ENCODE measurements at regions of chr2 and their contacts with region 1.

Region 1: GRCh38 chr2:209960676-209961630 is 41.5 kb upstream of the RPE start:
- DNase-seq: peak; percentile 73
- H3K4me3 Mint-ChIP-seq: no peak overlapping the region
- H3K27ac Mint-ChIP-seq: no peak overlapping the region
- H3K4me1 Mint-ChIP-seq: no peaks in the 10 kb centered on the region
- H3K27me3 Mint-ChIP-seq: no peaks in the 10 kb centered on the region
- CTCF ChIP-seq: peak; percentile 68

Region 2: DNA sequence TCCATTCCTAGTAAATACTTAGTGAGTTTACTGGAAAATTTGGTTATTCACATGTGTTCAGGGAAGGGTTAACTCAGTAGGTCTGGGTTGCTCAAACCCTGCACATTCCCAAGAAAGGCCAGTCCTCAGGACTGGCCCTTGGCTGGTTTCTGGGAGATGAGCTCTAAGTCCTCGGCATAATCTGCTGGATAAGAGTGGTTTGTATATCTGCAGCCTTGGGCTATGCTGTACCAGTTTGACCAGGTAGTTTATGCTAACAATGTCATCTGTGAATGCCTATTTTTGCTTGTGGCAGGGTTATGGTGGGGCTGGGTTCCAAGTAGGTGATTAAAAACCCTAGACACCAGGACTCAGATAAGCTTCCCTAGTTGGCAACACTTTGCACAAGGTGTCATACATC is 1561.8 kb before region 1 on chr2:
- CTCF ChIA-PET with region 1: no interaction called
- POLR2A ChIA-PET with region 1: no interaction called
- intact Hi-C with region 1: no loop called
- DNase-seq: no peak
- H3K4me3 Mint-ChIP-seq: no peak overlapping the region
- H3K27ac Mint-ChIP-seq: no peak overlapping the region
- H3K4me1 Mint-ChIP-seq: no peaks in the 10 kb centered on the region
- H3K27me3 Mint-ChIP-seq: peaks cover 48% of the 10 kb centered on the region
- CTCF ChIP-seq: no peak

Region 3: GRCh38 chr2:209556354-209556961 is 404.5 kb before region 1 on chr2:
- CTCF ChIA-PET with region 1: interaction called, 12 read pairs
- POLR2A ChIA-PET with region 1: no interaction called
- intact Hi-C with region 1: loop called (anchors 1 kb)
- DNase-seq: peak; percentile 62
- H3K4me3 Mint-ChIP-seq: no peak overlapping the region
- H3K27ac Mint-ChIP-seq: no peak overlapping the region
- H3K4me1 Mint-ChIP-seq: no peaks in the 10 kb centered on the region
- H3K27me3 Mint-ChIP-seq: no peaks in the 10 kb centered on the region
- CTCF ChIP-seq: peak; percentile 61

Region 4: DNA sequence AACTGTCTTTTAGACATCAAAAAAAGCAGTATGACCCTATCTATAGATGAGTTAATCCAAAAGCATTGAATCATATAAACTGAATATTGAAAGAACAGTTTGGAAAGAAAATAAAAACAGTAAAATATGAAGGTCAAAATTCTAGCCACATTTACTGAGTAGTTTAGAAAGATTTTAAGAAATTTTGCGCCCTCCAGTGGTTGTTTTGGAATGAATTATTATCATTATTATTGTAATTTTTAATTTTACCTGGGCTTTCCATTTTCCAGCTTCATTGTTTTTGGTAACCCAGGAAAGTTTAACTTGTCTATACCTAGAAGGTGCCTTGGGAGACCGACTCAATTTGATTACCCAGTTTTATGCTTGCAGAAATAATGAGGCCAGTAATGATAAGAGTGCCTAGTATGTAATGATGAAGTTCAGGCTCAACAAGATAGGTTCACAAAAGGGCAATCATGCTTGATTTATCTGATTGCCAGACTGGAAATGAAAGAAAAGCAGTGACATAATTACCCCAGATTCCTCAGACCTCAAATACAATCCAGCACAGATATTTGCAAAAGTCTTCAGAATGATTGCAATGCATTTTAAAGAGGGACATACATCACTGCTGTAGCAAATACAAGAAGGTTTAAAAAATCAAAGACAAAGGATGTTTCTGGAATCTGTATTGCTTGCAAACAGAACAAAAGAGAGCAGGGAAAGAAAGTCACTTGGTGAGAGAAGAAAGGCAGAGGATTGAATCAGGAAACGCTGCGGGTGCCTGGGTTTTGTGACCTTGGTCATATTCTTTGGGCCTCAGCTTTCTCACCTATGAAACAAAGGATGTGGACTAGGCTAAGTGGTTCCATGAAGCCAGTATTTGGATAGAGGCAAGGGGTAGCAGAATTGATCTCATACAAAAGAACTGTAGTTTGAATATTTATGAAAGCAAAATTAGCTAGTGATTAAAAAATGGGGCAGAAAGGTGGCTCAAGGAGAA is 383.3 kb before region 1 on chr2:
- CTCF ChIA-PET with region 1: interaction called, 4 read pairs
- POLR2A ChIA-PET with region 1: no interaction called
- intact Hi-C with region 1: loop called (anchors 5 kb)
- DNase-seq: peak; percentile 45
- H3K4me3 Mint-ChIP-seq: no peak overlapping the region
- H3K27ac Mint-ChIP-seq: no peak overlapping the region
- H3K4me1 Mint-ChIP-seq: no peaks in the 10 kb centered on the region
- H3K27me3 Mint-ChIP-seq: no peaks in the 10 kb centered on the region
- CTCF ChIP-seq: peak; percentile 32

Region 5: GRCh38 chr2:209790066-209790728 is 170.8 kb before region 1 on chr2:
- CTCF ChIA-PET with region 1: interaction called, 8 read pairs
- POLR2A ChIA-PET with region 1: no interaction called
- intact Hi-C with region 1: loop called (anchors 10 kb)
- DNase-seq: no peak
- H3K4me3 Mint-ChIP-seq: peak overlapping the region; percentile 4
- H3K27ac Mint-ChIP-seq: no peak overlapping the region
- H3K4me1 Mint-ChIP-seq: peaks cover 6% of the 10 kb centered on the region
- H3K27me3 Mint-ChIP-seq: no peaks in the 10 kb centered on the region
- CTCF ChIP-seq: no peak

Region 6: GRCh38 chr2:209840434-209840833 is 120.5 kb before region 1 on chr2:
- CTCF ChIA-PET with region 1: no interaction called
- POLR2A ChIA-PET with region 1: no interaction called
- intact Hi-C with region 1: no loop called
- DNase-seq: no peak
- H3K4me3 Mint-ChIP-seq: no peak overlapping the region
- H3K27ac Mint-ChIP-seq: no peak overlapping the region
- H3K4me1 Mint-ChIP-seq: no peaks in the 10 kb centered on the region
- H3K27me3 Mint-ChIP-seq: no peaks in the 10 kb centered on the region
- CTCF ChIP-seq: no peak

Region 7: DNA sequence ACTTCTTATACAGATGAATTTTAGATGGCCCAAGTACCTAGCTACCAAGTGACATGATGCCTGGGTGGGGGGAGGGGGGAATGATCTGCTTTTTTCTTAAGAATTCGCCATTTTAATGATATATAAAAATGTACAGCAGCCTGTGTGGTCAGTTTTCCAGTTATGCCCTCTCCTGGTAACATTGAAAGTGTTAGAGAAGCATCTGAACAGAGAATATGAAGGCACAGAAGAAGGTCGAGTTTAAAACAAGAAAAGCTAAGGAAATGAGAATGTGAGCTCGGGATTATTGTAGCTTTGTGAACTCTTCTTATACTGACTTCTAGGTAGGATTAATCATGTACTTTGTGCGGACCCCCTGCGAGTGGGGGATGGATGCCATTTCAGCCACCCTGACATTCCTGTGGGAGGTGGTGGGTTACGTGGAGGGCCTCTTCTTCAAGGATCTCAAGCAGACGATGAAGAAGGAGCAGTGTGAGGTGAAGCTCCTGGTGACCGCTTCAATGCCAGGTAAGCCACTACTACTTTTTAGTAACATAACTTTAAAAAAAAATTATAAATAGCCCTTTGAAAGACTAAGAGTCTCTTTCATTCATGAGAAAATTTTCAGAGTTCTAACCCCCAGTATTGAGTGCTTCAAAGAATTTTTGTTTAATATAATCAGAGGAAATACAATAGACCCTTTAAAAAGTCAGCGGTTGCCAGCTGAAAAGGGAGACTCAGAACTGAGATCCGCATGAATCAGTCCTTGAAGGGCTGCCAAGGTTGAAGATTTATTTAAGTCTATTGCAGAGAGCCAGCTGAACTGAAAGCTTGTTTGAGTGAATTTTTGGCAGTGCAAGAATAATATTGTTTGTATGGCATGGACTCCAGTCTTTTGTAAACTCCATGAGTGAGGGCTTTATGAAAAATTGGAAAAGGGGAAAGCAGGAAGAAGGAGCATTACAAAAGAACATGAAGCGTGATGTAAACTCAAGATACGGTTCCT is 27.2 kb before region 1 on chr2:
- CTCF ChIA-PET with region 1: interaction called, 11 read pairs
- POLR2A ChIA-PET with region 1: interaction called, 4 read pairs
- intact Hi-C with region 1: no loop called
- DNase-seq: peak; percentile 73
- H3K4me3 Mint-ChIP-seq: peak overlapping the region; percentile 38
- H3K27ac Mint-ChIP-seq: peak overlapping the region; percentile 27
- H3K4me1 Mint-ChIP-seq: peaks cover 13% of the 10 kb centered on the region
- H3K27me3 Mint-ChIP-seq: no peaks in the 10 kb centered on the region
- CTCF ChIP-seq: peak; percentile 7

Region 8: DNA sequence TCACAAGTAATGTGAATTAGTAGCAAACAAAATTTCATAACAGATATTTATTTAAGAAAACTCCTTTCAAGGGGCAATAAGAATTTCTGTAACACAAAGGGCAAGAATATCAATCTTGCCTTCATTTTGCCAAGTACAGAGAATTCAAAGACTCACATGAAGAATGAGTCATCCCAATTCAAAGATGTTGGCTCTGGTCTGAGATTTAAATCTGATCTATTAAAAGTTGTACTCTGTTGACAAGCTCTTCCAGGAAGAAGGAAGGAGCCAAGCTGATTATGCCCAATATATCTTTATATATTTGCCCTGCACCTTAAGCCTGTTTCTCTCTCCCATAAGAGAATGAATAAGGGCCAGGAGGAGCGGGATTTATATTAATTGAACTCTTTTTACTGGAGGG is 14.4 kb before region 1 on chr2:
- CTCF ChIA-PET with region 1: interaction called, 12 read pairs
- POLR2A ChIA-PET with region 1: interaction called, 3 read pairs
- intact Hi-C with region 1: no loop called
- DNase-seq: no peak
- H3K4me3 Mint-ChIP-seq: no peak overlapping the region
- H3K27ac Mint-ChIP-seq: no peak overlapping the region
- H3K4me1 Mint-ChIP-seq: no peaks in the 10 kb centered on the region
- H3K27me3 Mint-ChIP-seq: no peaks in the 10 kb centered on the region
- CTCF ChIP-seq: no peak

Region 9: GRCh38 chr2:210092791-210093190 is 131.8 kb after region 1 on chr2:
- CTCF ChIA-PET with region 1: no interaction called
- POLR2A ChIA-PET with region 1: no interaction called
- intact Hi-C with region 1: no loop called
- DNase-seq: no peak
- H3K4me3 Mint-ChIP-seq: no peak overlapping the region
- H3K27ac Mint-ChIP-seq: no peak overlapping the region
- H3K4me1 Mint-ChIP-seq: no peaks in the 10 kb centered on the region
- H3K27me3 Mint-ChIP-seq: no peaks in the 10 kb centered on the region
- CTCF ChIP-seq: no peak